Left lung (tissue), 14 donors: ENCODE measurements at regions of chr6 and their contacts with region 1.

Region 1: DNA sequence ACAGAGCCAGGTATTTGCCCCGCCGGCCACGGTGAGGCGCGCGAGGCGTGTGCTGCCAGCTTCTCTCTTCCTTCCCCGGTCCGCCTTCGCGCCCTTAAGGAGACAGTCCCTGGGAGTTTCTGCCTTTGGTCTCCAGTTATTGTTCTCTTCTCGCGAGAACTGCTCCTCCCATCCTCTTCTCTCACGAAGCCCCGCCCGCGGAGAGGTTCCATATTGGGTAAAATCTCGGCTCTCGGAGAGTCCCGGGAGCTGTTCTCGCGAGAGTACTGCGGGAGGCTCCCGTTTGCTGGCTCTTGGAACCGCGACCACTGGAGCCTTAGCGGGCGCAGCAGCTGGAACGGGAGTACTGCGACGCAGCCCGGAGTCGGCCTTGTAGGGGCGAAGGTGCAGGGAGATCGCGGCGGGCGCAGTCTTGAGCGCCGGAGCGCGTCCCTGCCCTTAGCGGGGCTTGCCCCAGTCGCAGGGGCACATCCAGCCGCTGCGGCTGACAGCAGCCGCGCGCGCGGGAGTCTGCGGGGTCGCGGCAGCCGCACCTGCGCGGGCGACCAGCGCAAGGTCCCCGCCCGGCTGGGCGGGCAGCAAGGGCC is at the start of gene MAPK14:
- DNase-seq: peak; percentile 98 to 100 (median 100)
- ATAC-seq: peak; percentile 91
- H3K4me3 ChIP-seq: peak within 1 kb of the TSS; percentile 89 to 97
- H3K27ac ChIP-seq: peak within 1 kb of the TSS; percentile 95 to 96
- H3K4me1 ChIP-seq: peaks cover 10 to 60% of the 10 kb centered on the region in 2 donors
- H3K27me3 ChIP-seq: peaks cover 0 to 11% of the 10 kb centered on the region in 2 donors
- CTCF ChIP-seq: peak; percentile 80 to 83
- polyA plus RNA-seq, gene MAPK14: 64.3 to 75.2 (median 68.3) TPM

Region 2: GRCh38 chr6:36094753-36095496 is 67.3 kb after region 1 on chr6:
- intact Hi-C with region 1: loop called in 1 of 2 experiments (anchors 5 kb)
- DNase-seq: peak; percentile 78 to 93 (median 84)
- ATAC-seq: peak; percentile 98
- H3K4me3 ChIP-seq: no peak overlapping the region
- H3K27ac ChIP-seq: no peak overlapping the region
- H3K4me1 ChIP-seq: peaks cover 0 to 17% of the 10 kb centered on the region in 2 donors
- H3K27me3 ChIP-seq: no peaks in the 10 kb centered on the region
- CTCF ChIP-seq: peak; percentile 87 to 97

Region 3: GRCh38 chr6:36123257-36124139 is 95.9 kb after region 1 on chr6:
- intact Hi-C with region 1: no loop called
- DNase-seq: peak; percentile 47 to 91 (median 86)
- ATAC-seq: peak; percentile 72
- H3K4me3 ChIP-seq: no peak overlapping the region
- H3K27ac ChIP-seq: peak overlapping the region in 1 of 2 donors; percentile 64
- H3K4me1 ChIP-seq: peaks cover 8 to 94% of the 10 kb centered on the region in 2 donors
- H3K27me3 ChIP-seq: no peaks in the 10 kb centered on the region
- CTCF ChIP-seq: peak; percentile 45 to 79